ENCODE measurements at regions of chr13 and their contacts with region 1.

Region 1: GRCh38 chr13:99339736-99340397 is 32.7 kb upstream of the GPR183 start:
- DNase-seq: peak in 6 of 9 experiments; percentile 55 to 85 (median 70)
- ATAC-seq: peak; percentile 72
- H3K4me3 ChIP-seq: peak overlapping the region in 1 of 2 experiments; percentile 14
- H3K4me3 Mint-ChIP-seq: peak overlapping the region; percentile 63
- H3K27ac ChIP-seq: peak overlapping the region; percentile 16 to 26
- H3K27ac Mint-ChIP-seq: peak overlapping the region; percentile 85
- H3K4me1 ChIP-seq: peaks cover 37% of the 10 kb centered on the region
- H3K4me1 Mint-ChIP-seq: peaks cover 77% of the 10 kb centered on the region
- H3K27me3 ChIP-seq: no peaks in the 10 kb centered on the region
- H3K27me3 Mint-ChIP-seq: no peaks in the 10 kb centered on the region
- CTCF ChIP-seq: no peak

Region 2: GRCh38 chr13:98706446-98707110 is 633.3 kb before region 1 on chr13:
- CTCF ChIA-PET with region 1: no interaction called
- POLR2A ChIA-PET with region 1: no interaction called
- intact Hi-C with region 1: no loop called
- DNase-seq: no peak
- ATAC-seq: no peak
- H3K4me3 ChIP-seq: no peak overlapping the region
- H3K4me3 Mint-ChIP-seq: no peak overlapping the region
- H3K27ac ChIP-seq: no peak overlapping the region
- H3K27ac Mint-ChIP-seq: no peak overlapping the region
- H3K4me1 ChIP-seq: no peaks in the 10 kb centered on the region
- H3K4me1 Mint-ChIP-seq: no peaks in the 10 kb centered on the region
- H3K27me3 ChIP-seq: peaks cover 0 to 5% of the 10 kb centered on the region in 2 experiments
- H3K27me3 Mint-ChIP-seq: peaks cover 28% of the 10 kb centered on the region
- CTCF ChIP-seq: no peak

Region 3: DNA sequence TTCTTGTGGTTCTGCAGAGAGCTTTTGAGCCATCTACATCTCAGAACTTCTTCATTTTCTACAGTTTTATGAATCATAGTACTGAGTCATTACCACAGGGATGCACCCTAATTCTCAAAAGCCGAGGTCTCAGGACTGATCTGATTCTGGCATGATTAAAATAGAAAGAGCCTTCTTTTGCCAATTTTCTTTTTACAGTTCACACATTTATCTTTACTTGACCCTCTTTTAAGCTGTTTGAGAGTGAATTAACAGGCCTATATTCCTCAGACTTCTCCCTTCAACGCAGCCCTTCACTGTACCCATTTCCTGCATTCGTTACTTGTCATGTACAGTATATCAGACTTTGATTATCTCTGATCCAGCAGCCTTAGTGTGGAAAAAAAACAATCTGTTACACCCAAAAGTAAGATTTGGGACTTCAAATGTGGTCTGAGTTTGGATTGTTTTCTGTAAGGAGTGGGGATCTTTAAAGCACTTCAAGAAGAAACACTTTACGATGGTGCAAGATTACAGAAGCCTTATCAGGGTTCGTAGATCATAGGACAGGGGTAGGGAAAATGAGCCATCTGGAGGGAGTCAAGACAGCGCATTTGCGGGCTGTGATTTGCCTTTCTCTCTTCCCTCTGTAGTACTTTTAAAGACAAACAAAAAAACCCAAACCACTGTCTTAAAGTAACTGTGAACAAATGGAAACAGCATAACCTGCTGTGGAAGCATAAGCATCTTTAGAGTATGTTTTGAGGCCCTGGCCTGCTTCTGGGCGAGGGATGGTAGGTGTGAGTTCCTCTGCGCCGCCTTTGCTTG is 17.4 kb before region 1 on chr13:
- CTCF ChIA-PET with region 1: no interaction called
- POLR2A ChIA-PET with region 1: interaction called, 5 read pairs
- intact Hi-C with region 1: loop called in 1 of 2 experiments (anchors 2 kb)
- DNase-seq: peak in 5 of 9 experiments; percentile 40 to 81 (median 46)
- ATAC-seq: peak; percentile 80
- H3K4me3 ChIP-seq: peak overlapping the region in 1 of 2 experiments; percentile 6
- H3K4me3 Mint-ChIP-seq: peak overlapping the region; percentile 57
- H3K27ac ChIP-seq: peak overlapping the region; percentile 22 to 56
- H3K27ac Mint-ChIP-seq: peak overlapping the region; percentile 92
- H3K4me1 ChIP-seq: peaks cover 56% of the 10 kb centered on the region
- H3K4me1 Mint-ChIP-seq: peaks cover 73% of the 10 kb centered on the region
- H3K27me3 ChIP-seq: no peaks in the 10 kb centered on the region
- H3K27me3 Mint-ChIP-seq: no peaks in the 10 kb centered on the region
- CTCF ChIP-seq: no peak

Region 4: GRCh38 chr13:99371956-99372355 is 32.1 kb after region 1 on chr13:
- CTCF ChIA-PET with region 1: no interaction called
- POLR2A ChIA-PET with region 1: no interaction called
- intact Hi-C with region 1: no loop called
- DNase-seq: peak in 8 of 9 experiments; percentile 49 to 85 (median 72)
- ATAC-seq: peak; percentile 39
- H3K4me3 ChIP-seq: no peak overlapping the region
- H3K4me3 Mint-ChIP-seq: peak overlapping the region; percentile 68
- H3K27ac ChIP-seq: peak overlapping the region; percentile 42 to 44
- H3K27ac Mint-ChIP-seq: peak overlapping the region; percentile 98
- H3K4me1 ChIP-seq: peaks cover 84% of the 10 kb centered on the region
- H3K4me1 Mint-ChIP-seq: peaks cover 94% of the 10 kb centered on the region
- H3K27me3 ChIP-seq: no peaks in the 10 kb centered on the region
- H3K27me3 Mint-ChIP-seq: no peaks in the 10 kb centered on the region
- CTCF ChIP-seq: no peak

Measured in CD8-positive, alpha-beta T cell (primary cell).